OCI-LY7 (cell line): ENCODE measurements at regions of chr19 and their contacts with region 1.

Region 1: GRCh38 chr19:47600246-47601179 is 8.4 kb upstream of the BICRA start:
- DNase-seq: peak; percentile 100
- H3K4me3 ChIP-seq: peak overlapping the region; percentile 72
- H3K27ac ChIP-seq: peak overlapping the region; percentile 59
- H3K4me1 ChIP-seq: peaks cover 28% of the 10 kb centered on the region
- CTCF ChIP-seq: no peak

Region 2: GRCh38 chr19:47573071-47574026 is 27.2 kb before region 1 on chr19 and contains the start of gene ZNF541:
- CTCF ChIA-PET with region 1: no interaction called
- POLR2A ChIA-PET with region 1: interaction called, 4 read pairs
- intact Hi-C with region 1: loop called (anchors 2 kb)
- DNase-seq: no peak
- H3K4me3 ChIP-seq: no peak within 1 kb of the TSS
- H3K27ac ChIP-seq: no peak within 1 kb of the TSS
- H3K4me1 ChIP-seq: peaks cover 41% of the 10 kb centered on the region
- CTCF ChIP-seq: no peak
- total RNA-seq, gene ZNF541: not detected in 2 replicates

Region 3: GRCh38 chr19:47719047-47719859 is 118.7 kb after region 1 on chr19:
- CTCF ChIA-PET with region 1: no interaction called
- POLR2A ChIA-PET with region 1: no interaction called
- intact Hi-C with region 1: no loop called
- DNase-seq: no peak
- H3K4me3 ChIP-seq: no peak overlapping the region
- H3K27ac ChIP-seq: no peak overlapping the region
- H3K4me1 ChIP-seq: no peaks in the 10 kb centered on the region
- CTCF ChIP-seq: no peak